ENCODE measurements at regions of chr16 and their contacts with region 1.

Region 1: GRCh38 chr16:29995911-29996772 is at the start of gene INO80E:
- DNase-seq: peak; percentile 99 to 100 (median 99)
- ATAC-seq: peak; percentile 98 to 99 (median 98)
- H3K4me3 ChIP-seq: peak within 1 kb of the TSS; percentile 53 to 95 (median 80)
- H3K27ac ChIP-seq: peak within 1 kb of the TSS; percentile 88 to 100 (median 96)
- H3K4me1 ChIP-seq: peaks cover 0 to 31% (median 18%) of the 10 kb centered on the region in 12 donors
- H3K27me3 ChIP-seq: no peaks in the 10 kb centered on the region
- CTCF ChIP-seq: no peak
- POLR2A ChIP-seq: peak in 1 of 2 donors; percentile 58
- total RNA-seq, gene INO80E: 27.6 to 65.4 (median 32.6) TPM

Region 2: GRCh38 chr16:29805378-29806098 is 190.6 kb before region 1 on chr16:
- intact Hi-C with region 1: loop called in 4 of 10 experiments (anchors 5 to 10 kb)
- DNase-seq: peak; percentile 98 to 99 (median 98)
- ATAC-seq: peak; percentile 84 to 89 (median 88)
- H3K4me3 ChIP-seq: peak overlapping the region; percentile 65 to 98 (median 83)
- H3K27ac ChIP-seq: peak overlapping the region; percentile 95 to 100 (median 99)
- H3K4me1 ChIP-seq: peaks cover 3 to 47% (median 42%) of the 10 kb centered on the region in 12 donors
- H3K27me3 ChIP-seq: no peaks in the 10 kb centered on the region
- CTCF ChIP-seq: no peak
- POLR2A ChIP-seq: peak in 1 of 2 donors; percentile 81

Region 3: DNA sequence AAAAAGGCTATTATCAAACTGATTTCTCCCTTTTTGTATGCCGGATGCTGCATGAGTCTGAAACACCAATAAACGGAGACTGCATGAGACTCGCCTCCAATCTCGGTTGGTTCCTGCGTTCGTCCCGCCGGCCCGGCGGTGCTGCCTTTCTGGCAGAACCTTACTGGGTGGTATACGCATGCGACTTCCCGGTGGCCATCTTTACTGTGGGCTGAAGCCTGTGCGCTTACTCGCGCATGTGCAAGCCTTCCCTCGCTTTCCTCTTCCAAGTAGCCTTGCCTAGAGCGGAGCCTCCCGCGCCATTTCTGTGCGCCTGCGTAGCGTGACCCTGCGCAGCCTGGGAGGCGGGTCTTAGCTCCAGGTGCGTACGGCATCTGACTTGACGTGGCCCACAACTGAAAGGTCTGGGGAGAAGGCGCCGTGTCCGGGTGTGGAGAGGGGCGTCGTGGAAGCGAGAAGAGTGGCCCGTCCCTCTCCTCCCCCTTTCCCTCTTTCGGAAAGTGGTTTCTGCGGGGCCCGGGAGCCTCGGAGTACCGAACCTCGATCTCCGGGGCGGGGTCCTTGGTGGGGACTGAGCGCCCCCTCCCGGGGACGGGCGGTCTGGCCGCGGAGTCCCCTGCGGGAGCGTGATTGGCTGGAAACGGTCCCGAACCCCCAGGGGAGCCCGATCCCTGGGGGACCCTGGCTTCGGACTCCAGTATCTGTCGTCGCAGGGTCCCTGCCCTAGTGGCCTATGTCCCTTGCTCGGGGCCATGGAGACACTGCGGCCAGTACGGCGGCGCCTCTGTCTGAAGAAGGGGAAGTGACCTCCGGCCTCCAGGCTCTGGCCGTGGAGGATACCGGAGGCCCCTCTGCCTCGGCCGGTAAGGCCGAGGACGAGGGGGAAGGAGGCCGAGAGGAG is 180.1 kb before region 1 on chr16 and contains the start of gene PAGR1:
- intact Hi-C with region 1: loop called in 2 of 10 experiments (anchors 10 kb)
- DNase-seq: peak; percentile 97 to 99 (median 99)
- ATAC-seq: peak; percentile 80 to 89 (median 86)
- H3K4me3 ChIP-seq: peak within 1 kb of the TSS; percentile 45 to 91 (median 74)
- H3K27ac ChIP-seq: peak within 1 kb of the TSS; percentile 84 to 97 (median 93)
- H3K4me1 ChIP-seq: peaks cover 3 to 71% (median 51%) of the 10 kb centered on the region in 12 donors
- H3K27me3 ChIP-seq: peaks cover 0 to 4% (median 0%) of the 10 kb centered on the region in 9 donors
- CTCF ChIP-seq: peak; percentile 82 to 98 (median 91)
- POLR2A ChIP-seq: peak in 1 of 2 donors; percentile 60
- total RNA-seq, gene PAGR1: 10.8 to 23.9 (median 12.6) TPM

Region 4: DNA sequence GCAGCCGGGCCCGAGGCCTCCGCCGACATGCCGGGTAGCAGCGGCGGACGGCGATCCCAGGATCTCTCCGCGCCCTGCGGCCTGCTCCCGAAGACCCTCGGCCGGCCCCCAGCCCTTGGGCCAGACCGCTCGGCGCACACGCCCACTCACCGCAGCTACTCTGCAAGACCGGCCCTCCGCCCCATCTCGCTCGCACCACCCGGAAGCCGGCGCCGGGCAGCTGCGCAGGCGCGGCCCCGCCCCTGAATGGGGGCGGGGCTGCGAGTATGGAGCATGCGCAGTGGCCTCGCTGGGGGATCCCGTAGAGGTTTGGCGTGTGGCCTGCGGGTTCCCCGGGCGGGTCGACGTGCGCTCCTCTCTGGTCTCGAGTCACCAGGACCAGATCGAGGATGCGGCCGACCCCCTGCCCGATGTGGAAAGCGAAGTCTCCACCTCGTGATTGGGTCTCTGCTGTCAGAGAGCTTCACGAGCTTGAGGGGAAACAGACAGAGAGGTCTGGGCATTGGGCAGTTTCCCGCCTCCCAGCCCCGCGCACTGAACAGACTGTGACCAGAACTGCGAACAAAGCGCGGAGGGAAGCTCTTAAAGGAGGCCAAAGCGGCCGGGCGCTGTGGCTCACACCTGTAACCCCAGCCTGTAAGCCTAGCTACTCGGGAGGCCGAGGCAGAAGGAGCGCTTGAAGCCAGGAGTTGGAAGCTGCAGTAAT is 70.0 kb before region 1 on chr16 and contains the start of gene KCTD13:
- intact Hi-C with region 1: loop called in 5 of 10 experiments (anchors 1 to 10 kb)
- DNase-seq: peak; percentile 85 to 95 (median 89)
- ATAC-seq: peak; percentile 89 to 99 (median 99)
- H3K4me3 ChIP-seq: peak within 1 kb of the TSS; percentile 72 to 100 (median 92)
- H3K27ac ChIP-seq: peak within 1 kb of the TSS; percentile 72 to 96 (median 88)
- H3K4me1 ChIP-seq: peaks cover 4 to 27% (median 18%) of the 10 kb centered on the region in 12 donors
- H3K27me3 ChIP-seq: no peaks in the 10 kb centered on the region
- CTCF ChIP-seq: no peak
- POLR2A ChIP-seq: peak in 1 of 2 donors; percentile 93
- total RNA-seq, gene KCTD13: 3.6 to 9.1 (median 7.2) TPM

Region 5: GRCh38 chr16:29961479-29962343 is 34.4 kb before region 1 on chr16 and contains the start of gene TMEM219:
- intact Hi-C with region 1: loop called in 6 of 10 experiments (anchors 5 to 10 kb)
- DNase-seq: peak; percentile 93 to 97 (median 94)
- ATAC-seq: peak; percentile 89 to 99 (median 97)
- H3K4me3 ChIP-seq: peak within 1 kb of the TSS; percentile 59 to 98 (median 76)
- H3K27ac ChIP-seq: peak within 1 kb of the TSS; percentile 76 to 98 (median 96)
- H3K4me1 ChIP-seq: peaks cover 0 to 35% (median 18%) of the 10 kb centered on the region in 12 donors
- H3K27me3 ChIP-seq: no peaks in the 10 kb centered on the region
- CTCF ChIP-seq: peak; percentile 23 to 67 (median 48)
- POLR2A ChIP-seq: peak in 1 of 2 donors; percentile 85
- total RNA-seq, gene TMEM219: 58.9 to 121 (median 69.8) TPM